ENCODE measurements at regions of chr21 and their contacts with region 1.

Region 1: DNA sequence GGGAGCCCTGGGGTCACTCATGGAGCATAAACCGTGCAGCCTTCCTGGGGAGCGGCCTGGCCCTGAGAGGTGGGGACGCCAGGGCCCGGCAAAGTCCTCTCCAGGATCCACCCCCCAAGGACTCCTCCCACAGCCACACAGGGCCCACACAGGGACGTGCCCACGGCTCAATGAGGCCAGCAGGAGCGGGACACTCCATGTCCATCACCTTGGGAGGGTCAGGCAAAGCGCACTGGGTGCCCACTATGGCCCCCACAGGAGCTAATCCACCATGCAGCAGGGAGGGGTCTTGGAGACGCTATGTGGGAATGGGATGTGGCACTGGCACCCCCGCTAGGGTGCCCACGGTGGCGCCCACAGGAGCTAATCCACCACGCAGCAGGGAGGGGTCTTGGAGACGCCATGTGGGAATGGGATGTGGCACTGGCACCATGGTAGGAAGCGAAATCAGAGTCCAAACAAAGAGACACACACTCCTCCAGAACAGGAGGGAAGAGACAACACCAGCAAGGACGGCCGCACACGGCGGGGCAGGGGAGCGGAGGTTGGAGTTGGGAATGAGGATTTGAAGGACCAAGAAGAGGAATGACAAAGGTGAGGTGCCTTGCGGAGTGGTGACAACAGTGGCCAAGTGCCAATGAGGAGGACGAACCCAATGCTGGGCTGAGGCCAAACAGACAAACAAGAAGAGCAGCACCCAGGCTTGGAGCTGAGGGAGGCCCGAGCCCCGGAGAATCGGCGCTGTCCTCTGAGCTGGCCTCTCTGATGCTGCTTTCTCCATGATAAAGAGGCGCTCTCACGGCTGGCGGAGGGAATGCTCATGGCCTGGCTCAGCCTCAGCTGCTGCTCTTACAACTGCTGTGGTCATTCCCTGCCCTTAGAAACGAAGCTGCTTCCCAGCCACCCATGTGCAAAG is 18.1 kb upstream of the SLC19A1 start:
- DNase-seq: no peak
- H3K4me3 ChIP-seq: no peak overlapping the region
- H3K27ac ChIP-seq: no peak overlapping the region
- H3K4me1 ChIP-seq: no peaks in the 10 kb centered on the region
- H3K27me3 ChIP-seq: no peaks in the 10 kb centered on the region
- CTCF ChIP-seq: no peak
- EP300 ChIP-seq: no peak
- POLR2A ChIP-seq: no peak

Region 2: DNA sequence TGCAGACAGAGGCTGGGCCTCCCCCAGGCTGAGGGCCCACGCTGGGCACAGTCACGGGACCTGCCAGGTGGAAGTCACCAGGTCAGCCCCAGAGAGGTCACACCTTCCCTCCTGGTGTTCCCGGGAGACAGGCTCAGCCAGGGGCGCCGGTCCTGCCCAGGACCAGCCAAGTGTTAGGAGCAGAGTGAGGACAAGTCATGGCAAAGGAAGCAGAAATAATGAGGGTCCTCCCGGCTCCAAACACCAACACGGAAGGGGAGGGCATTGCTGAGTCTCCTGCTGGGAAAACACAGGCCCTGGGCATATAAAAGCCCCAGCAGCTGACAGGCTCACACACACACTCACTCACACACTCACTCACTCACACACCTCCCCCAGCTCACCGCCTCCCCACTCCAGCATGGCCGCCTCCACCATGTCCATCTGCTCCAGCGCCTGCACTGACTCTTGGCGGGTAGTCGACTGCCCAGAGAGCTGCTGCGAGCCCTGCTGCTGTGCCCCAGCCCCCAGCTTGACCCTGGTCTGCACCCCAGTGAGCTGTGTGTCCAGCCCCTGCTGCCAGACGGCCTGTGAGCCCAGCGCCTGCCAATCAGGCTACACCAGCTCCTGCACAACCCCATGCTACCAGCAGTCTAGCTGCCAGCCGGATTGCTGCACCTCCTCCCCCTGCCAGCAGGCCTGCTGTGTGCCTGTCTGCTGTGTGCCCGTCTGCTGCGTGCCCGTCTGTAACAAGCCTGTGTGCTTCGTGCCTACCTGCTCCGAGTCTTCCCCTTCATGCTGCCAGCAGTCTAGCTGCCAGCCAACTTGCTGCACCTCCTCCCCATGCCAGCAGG is 923.1 kb before region 1 on chr21 and contains the start of gene KRTAP10-10:
- intact Hi-C with region 1: no loop called
- DNase-seq: no peak
- H3K4me3 ChIP-seq: no peak within 1 kb of the TSS
- H3K27ac ChIP-seq: no peak within 1 kb of the TSS
- H3K4me1 ChIP-seq: no peaks in the 10 kb centered on the region
- H3K27me3 ChIP-seq: no peaks in the 10 kb centered on the region
- CTCF ChIP-seq: no peak
- EP300 ChIP-seq: no peak
- POLR2A ChIP-seq: no peak
- total RNA-seq, gene KRTAP10-10: not detected

Region 3: GRCh38 chr21:45611939-45612664 is 51.7 kb after region 1 on chr21:
- intact Hi-C with region 1: loop called in 1 of 4 experiments (anchors 5 kb)
- DNase-seq: peak in 2 of 5 donors; percentile 4 to 31
- H3K4me3 ChIP-seq: no peak overlapping the region
- H3K27ac ChIP-seq: no peak overlapping the region
- H3K4me1 ChIP-seq: no peaks in the 10 kb centered on the region
- H3K27me3 ChIP-seq: no peaks in the 10 kb centered on the region
- CTCF ChIP-seq: no peak
- EP300 ChIP-seq: no peak
- POLR2A ChIP-seq: no peak

Region 4: GRCh38 chr21:45643021-45643980 is 82.9 kb after region 1 on chr21 and contains the start of gene PCBP3:
- intact Hi-C with region 1: loop called in 1 of 4 experiments (anchors 10 kb)
- DNase-seq: peak; percentile 95 to 99 (median 98)
- H3K4me3 ChIP-seq: peak within 1 kb of the TSS; percentile 43
- H3K27ac ChIP-seq: peak within 1 kb of the TSS; percentile 23 to 73
- H3K4me1 ChIP-seq: no peaks in the 10 kb centered on the region
- H3K27me3 ChIP-seq: no peaks in the 10 kb centered on the region
- CTCF ChIP-seq: no peak
- EP300 ChIP-seq: no peak
- POLR2A ChIP-seq: no peak
- total RNA-seq, gene PCBP3: 3.7 to 10.1 (median 6.4) TPM

Measured in ovary (tissue), 10 donors.